Activated CD4-positive, alpha-beta T cell treated with anti-CD3 and anti-CD28 coated beads for 36 hours (primary cell): ENCODE measurements at regions of chr17 and their contacts with region 1.

Region 1: GRCh38 chr17:1829592-1830257 is at the starts of genes RPA1 and SMYD4:
- DNase-seq: peak; percentile 95
- ATAC-seq: peak; percentile 98
- H3K4me3 Mint-ChIP-seq: peak within 1 kb of the TSS; percentile 98
- H3K27ac Mint-ChIP-seq: peak within 1 kb of the TSS; percentile 93
- H3K4me1 Mint-ChIP-seq: peaks cover 59% of the 10 kb centered on the region
- H3K27me3 Mint-ChIP-seq: no peaks in the 10 kb centered on the region
- total RNA-seq, gene RPA1: 134 to 191 TPM
- total RNA-seq, gene SMYD4: 19.7 to 19.8 TPM

Region 2: DNA sequence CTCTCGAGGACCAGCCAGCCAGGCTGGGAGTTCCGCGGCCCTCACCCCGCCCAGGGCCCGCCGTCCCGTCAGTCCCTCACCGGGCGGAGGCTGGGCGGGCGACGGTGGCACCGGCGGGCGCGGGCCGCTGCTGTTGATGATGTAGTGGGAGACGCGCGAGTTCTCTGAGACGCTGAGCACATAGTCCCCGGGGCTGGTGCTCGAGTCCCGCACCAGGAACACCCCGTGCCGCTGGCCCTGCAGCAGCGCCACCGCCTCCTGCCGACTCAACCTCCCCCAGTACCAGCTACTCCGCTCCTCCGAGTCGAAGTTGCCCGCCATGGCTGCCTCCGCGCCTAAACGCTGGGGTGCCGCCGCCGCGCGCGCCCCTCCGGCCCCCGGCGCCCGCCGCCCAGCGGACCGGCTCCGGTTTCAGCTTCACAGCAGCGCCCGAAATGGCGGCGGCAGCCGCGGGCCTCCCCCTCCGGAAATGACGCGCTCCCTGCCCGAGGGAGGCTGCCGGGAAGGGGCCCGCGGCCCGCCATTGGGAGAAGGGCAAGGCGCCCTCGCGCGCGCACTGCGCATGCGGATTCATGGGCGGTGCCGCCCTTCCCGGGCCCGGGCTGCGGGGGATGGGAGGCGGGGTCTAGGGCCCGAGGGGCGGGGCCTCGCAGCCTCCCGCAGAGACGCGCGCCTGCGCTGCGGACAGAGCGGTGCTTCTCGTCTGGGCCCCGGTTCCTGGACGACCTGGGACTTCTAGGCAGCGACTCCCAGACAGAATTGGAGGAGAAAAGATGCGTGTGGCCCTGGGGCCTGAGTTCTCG is 373.7 kb before region 1 on chr17 and contains the start of gene CRK:
- CTCF ChIA-PET with region 1: no interaction called
- POLR2A ChIA-PET with region 1: no interaction called
- intact Hi-C with region 1: loop called in 1 of 2 experiments (anchors 5 kb)
- DNase-seq: peak; percentile 99
- ATAC-seq: peak; percentile 93
- H3K4me3 Mint-ChIP-seq: peak within 1 kb of the TSS; percentile 82
- H3K27ac Mint-ChIP-seq: peak within 1 kb of the TSS; percentile 89
- H3K4me1 Mint-ChIP-seq: peaks cover 46% of the 10 kb centered on the region
- H3K27me3 Mint-ChIP-seq: peaks cover 9% of the 10 kb centered on the region
- total RNA-seq, gene CRK: 10.1 to 11.6 TPM

Region 3: DNA sequence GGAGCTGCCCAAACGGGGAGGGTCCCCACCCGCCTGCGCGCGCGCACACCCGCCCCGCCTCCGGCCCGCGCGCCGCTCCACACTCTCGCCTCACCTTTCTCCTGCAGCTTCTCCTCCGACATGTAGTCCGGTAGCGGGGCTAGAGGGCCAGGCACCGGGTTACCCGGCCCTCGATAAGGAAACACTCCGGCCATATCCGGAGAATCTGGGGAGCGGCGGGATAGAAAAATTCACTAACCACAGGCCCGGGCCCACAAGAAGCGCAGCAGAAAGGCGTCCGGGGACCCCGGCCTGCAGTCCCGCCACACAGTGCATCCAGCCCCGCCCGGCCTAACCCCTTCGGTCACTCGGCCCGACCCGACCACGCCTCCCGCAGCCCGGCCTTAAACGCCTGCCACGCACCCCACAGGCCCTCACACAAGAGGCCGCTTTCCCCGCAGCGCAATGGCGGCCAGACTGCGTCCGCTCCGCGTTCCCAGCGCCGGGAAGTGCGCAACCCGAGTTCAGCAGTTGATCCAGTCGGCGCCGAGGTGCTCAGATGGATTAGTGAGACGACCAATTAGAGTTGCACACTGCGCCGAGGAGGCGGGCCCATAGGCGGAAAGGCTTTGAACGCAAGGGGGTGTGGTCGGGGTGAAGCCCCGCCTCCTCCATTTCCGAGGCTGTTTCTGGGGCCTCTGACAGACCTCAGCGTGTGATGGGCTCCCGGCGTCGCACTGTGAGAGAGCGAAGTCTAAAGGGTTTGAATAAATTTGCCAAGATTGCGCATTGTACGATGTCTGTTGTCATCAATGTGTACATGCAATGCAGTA is 145.1 kb before region 1 on chr17 and contains the start of gene PRPF8:
- CTCF ChIA-PET with region 1: interaction called, 3 read pairs
- POLR2A ChIA-PET with region 1: no interaction called
- intact Hi-C with region 1: loop called in 1 of 2 experiments (anchors 1 kb)
- DNase-seq: peak; percentile 99
- ATAC-seq: peak; percentile 100
- H3K4me3 Mint-ChIP-seq: peak within 1 kb of the TSS; percentile 98
- H3K27ac Mint-ChIP-seq: peak within 1 kb of the TSS; percentile 93
- H3K4me1 Mint-ChIP-seq: peaks cover 34% of the 10 kb centered on the region
- H3K27me3 Mint-ChIP-seq: no peaks in the 10 kb centered on the region
- total RNA-seq, gene PRPF8: 391 to 425 TPM

Region 4: GRCh38 chr17:2041561-2042366 is 212.0 kb after region 1 on chr17 and contains the start of gene OVCA2:
- CTCF ChIA-PET with region 1: no interaction called
- POLR2A ChIA-PET with region 1: no interaction called
- intact Hi-C with region 1: loop called in 1 of 2 experiments (anchors 1 kb)
- DNase-seq: peak; percentile 99
- ATAC-seq: peak; percentile 92
- H3K4me3 Mint-ChIP-seq: peak within 1 kb of the TSS; percentile 95
- H3K27ac Mint-ChIP-seq: peak within 1 kb of the TSS; percentile 95
- H3K4me1 Mint-ChIP-seq: peaks cover 23% of the 10 kb centered on the region
- H3K27me3 Mint-ChIP-seq: no peaks in the 10 kb centered on the region
- total RNA-seq, gene OVCA2: 31.4 to 38.6 TPM

Region 5: GRCh38 chr17:2336215-2336851 is 506.6 kb after region 1 on chr17 and contains the start of gene TSR1:
- CTCF ChIA-PET with region 1: no interaction called
- POLR2A ChIA-PET with region 1: no interaction called
- intact Hi-C with region 1: loop called in 1 of 2 experiments (anchors 2 kb)
- DNase-seq: peak; percentile 94
- ATAC-seq: peak; percentile 93
- H3K4me3 Mint-ChIP-seq: no peak within 1 kb of the TSS
- H3K27ac Mint-ChIP-seq: peak within 1 kb of the TSS; percentile 99
- H3K4me1 Mint-ChIP-seq: peaks cover 14% of the 10 kb centered on the region
- H3K27me3 Mint-ChIP-seq: no peaks in the 10 kb centered on the region
- total RNA-seq, gene TSR1: 59.3 to 77.0 TPM

Region 6: GRCh38 chr17:2592971-2593820 is 763.5 kb after region 1 on chr17 and contains the start of gene PAFAH1B1:
- CTCF ChIA-PET with region 1: no interaction called
- POLR2A ChIA-PET with region 1: no interaction called
- intact Hi-C with region 1: loop called in 1 of 2 experiments (anchors 5 kb)
- DNase-seq: peak; percentile 98
- ATAC-seq: peak; percentile 84
- H3K4me3 Mint-ChIP-seq: peak within 1 kb of the TSS; percentile 79
- H3K27ac Mint-ChIP-seq: peak within 1 kb of the TSS; percentile 88
- H3K4me1 Mint-ChIP-seq: peaks cover 25% of the 10 kb centered on the region
- H3K27me3 Mint-ChIP-seq: no peaks in the 10 kb centered on the region
- total RNA-seq, gene PAFAH1B1: 163 to 167 TPM